K562 (cell line): ENCODE measurements at regions of chr1 and their contacts with region 1.

Region 1: DNA sequence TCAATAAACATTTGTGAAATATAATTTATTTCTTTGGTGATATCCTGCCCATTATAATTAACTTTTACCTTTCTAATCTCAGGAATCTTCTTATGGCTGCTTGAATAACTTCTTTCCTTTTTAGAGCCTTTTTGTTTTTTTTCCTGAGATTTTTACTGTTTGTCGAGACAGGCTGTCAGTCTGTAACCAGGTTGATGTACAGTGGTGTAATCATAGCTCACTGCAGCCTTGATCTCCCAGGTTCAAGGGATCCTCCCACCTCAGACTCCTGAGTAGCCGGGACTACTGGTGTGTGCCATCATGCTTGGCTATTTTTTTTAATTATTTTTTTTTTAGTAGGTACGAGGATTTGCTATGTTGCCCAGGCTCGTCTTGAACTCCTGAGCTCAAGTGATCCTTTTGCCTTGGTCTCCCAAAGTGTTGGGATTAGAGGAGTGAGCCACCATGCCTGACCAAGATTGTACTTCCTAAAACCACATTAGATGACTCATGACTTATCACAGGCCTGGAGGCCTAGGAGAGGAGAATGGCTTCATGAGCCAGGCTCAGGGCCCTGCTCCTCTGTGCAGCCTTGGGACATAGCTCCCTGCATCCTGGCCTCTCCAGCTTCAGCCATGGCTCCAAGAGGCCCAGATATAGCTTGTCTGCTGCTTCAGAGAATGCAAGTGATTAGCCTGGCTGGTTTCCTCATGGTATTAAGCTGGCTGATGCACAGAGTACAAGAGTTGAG is 48.6 kb downstream of the CTH start:
- DNase-seq: peak in 2 of 4 experiments; percentile 31 to 75
- ATAC-seq: peak; percentile 95
- H3K4me3 ChIP-seq: no peak overlapping the region
- H3K27ac ChIP-seq: peak overlapping the region; percentile 5; the same call in 1 of the 3 replicates
- H3K4me1 ChIP-seq: peaks cover 14 to 19% of the 10 kb centered on the region in 2 experiments
- H3K27me3 ChIP-seq: no peaks in the 10 kb centered on the region
- CTCF ChIP-seq: no peak
- EP300 ChIP-seq: no peak; the same call in 1 of the 2 replicates
- POLR2A ChIP-seq: no peak
- RAD21 ChIP-seq: no peak

Region 2: GRCh38 chr1:70146488-70146887 is 313.2 kb before region 1 on chr1:
- CTCF ChIA-PET with region 1: no interaction called
- POLR2A ChIA-PET with region 1: no interaction called
- in situ Hi-C with region 1: no loop called
- intact Hi-C with region 1: no loop called
- DNase-seq: peak in 1 of 4 experiments; percentile 12
- ATAC-seq: no peak
- H3K4me3 ChIP-seq: no peak overlapping the region
- H3K27ac ChIP-seq: no peak overlapping the region
- H3K4me1 ChIP-seq: no peaks in the 10 kb centered on the region
- H3K27me3 ChIP-seq: no peaks in the 10 kb centered on the region
- CTCF ChIP-seq: no peak
- EP300 ChIP-seq: no peak
- POLR2A ChIP-seq: no peak
- RAD21 ChIP-seq: no peak

Region 3: DNA sequence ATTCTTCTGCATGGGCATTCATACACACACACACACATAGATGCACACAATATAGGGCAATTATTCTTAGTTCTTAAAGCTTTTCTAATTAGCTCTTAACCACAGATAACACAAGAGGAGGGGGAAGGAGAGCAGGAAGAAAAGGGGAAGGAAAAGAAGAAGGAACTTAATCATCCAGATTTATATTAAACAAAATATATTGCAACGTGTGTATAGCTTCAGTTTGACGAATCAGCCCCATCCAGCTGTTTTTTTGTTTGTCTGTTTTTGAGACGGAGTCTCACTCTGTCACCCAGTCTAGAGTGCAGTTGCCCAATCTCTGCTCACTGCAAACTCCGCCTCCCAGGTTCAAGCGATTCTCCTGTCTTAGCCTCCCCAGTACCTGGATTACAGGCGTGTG is 83.5 kb before region 1 on chr1:
- CTCF ChIA-PET with region 1: no interaction called
- POLR2A ChIA-PET with region 1: no interaction called
- in situ Hi-C with region 1: no loop called
- intact Hi-C with region 1: no loop called
- DNase-seq: no peak
- ATAC-seq: no peak
- H3K4me3 ChIP-seq: no peak overlapping the region
- H3K27ac ChIP-seq: no peak overlapping the region
- H3K4me1 ChIP-seq: no peaks in the 10 kb centered on the region; a peak in 2 of 5 replicates
- H3K27me3 ChIP-seq: no peaks in the 10 kb centered on the region
- CTCF ChIP-seq: no peak
- EP300 ChIP-seq: no peak
- POLR2A ChIP-seq: no peak
- RAD21 ChIP-seq: no peak

Region 4: DNA sequence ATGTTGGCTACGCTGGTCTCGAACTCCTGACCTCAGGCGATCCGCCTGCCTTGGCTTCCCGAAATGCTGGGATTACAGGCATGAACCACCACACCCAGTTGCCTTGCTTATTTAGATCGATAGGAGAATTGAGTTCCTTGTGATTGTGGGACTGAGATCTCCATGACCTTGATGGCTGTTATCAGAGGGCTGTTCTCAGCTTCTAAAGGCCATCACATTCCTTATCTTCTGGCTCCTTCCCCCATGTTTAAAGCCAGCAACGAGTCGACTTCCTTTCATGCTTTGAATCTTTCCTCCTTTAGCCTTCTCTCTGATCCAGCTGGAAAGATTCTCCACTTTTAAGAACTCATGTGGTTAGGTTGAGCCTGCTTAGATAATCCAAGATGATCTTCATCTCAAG is 10.6 kb before region 1 on chr1:
- CTCF ChIA-PET with region 1: no interaction called
- POLR2A ChIA-PET with region 1: interaction called, 17 read pairs
- in situ Hi-C with region 1: no loop called
- intact Hi-C with region 1: no loop called
- DNase-seq: peak in 1 of 4 experiments; percentile 6
- ATAC-seq: peak; percentile 21; the same call in 1 of the 3 replicates
- H3K4me3 ChIP-seq: no peak overlapping the region
- H3K27ac ChIP-seq: no peak overlapping the region
- H3K4me1 ChIP-seq: peaks cover 0 to 4% of the 10 kb centered on the region in 2 experiments; a peak in 1 of 5 replicates
- H3K27me3 ChIP-seq: no peaks in the 10 kb centered on the region
- CTCF ChIP-seq: no peak
- EP300 ChIP-seq: no peak
- POLR2A ChIP-seq: no peak
- RAD21 ChIP-seq: no peak